ENCODE measurements at regions of chr11 and their contacts with region 1.

Region 1: GRCh38 chr11:73335204-73335923 is 27.3 kb downstream of the ARHGEF17 start:
- DNase-seq: peak; percentile 93
- H3K4me3 Mint-ChIP-seq: no peak overlapping the region
- H3K27ac Mint-ChIP-seq: no peak overlapping the region
- H3K4me1 Mint-ChIP-seq: no peaks in the 10 kb centered on the region
- H3K27me3 Mint-ChIP-seq: peaks cover 6% of the 10 kb centered on the region

Region 2: DNA sequence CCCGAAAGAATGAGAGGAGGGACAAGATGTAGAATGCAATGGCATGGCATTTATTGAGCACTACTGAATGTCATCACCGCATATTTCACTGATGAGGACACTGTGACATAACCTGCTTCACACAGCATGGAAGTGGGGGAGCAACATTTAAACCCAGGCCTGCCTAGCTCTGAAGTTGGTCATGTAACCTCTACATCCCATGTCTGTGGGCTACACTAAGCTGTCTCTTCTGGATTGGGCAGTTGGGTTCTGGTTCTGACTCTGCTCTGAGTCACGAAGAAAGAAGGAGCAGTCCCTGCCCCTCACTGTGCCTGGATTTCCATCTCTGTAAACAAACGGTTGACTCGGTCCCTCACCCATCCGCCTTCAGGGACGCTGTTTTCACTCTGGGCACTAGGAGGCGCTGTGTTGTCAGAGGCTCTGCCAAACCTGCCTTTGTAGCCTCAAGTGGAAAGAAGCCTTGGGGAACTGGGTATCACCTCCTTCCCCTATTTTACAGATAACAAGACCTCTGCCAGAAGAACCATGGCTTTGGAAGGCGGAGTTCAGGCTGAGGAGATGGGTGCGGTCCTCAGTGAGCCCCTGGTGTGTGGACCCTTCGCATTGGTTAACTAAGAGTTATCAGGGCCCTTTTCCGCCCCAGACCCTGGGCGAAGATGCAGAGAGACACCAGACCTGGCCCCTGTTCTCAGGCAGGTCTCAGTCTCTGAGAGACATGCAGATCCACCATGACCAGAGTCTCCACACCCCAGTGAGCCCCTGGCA is 40.0 kb before region 1 on chr11:
- intact Hi-C with region 1: loop called (anchors 1 kb)
- DNase-seq: peak; percentile 94
- H3K4me3 Mint-ChIP-seq: no peak overlapping the region
- H3K27ac Mint-ChIP-seq: no peak overlapping the region
- H3K4me1 Mint-ChIP-seq: peaks cover 2% of the 10 kb centered on the region
- H3K27me3 Mint-ChIP-seq: peaks cover 16% of the 10 kb centered on the region

Measured in activated CD4-positive, alpha-beta T cell treated with anti-CD3 and anti-CD28 coated beads, Interleukin-2, amount 10 ng/mL, durations not matched to agents 24 days and 14 days (primary cell).